HCT116 (cell line): ENCODE measurements at regions of chr1 and their contacts with region 1.

Region 1: GRCh38 chr1:66446261-66447001 is 87.5 kb upstream of the SGIP1 start:
- DNase-seq: peak; percentile 74
- ATAC-seq: peak; percentile 76
- H3K4me3 ChIP-seq: no peak overlapping the region
- H3K27ac ChIP-seq: no peak overlapping the region
- H3K4me1 ChIP-seq: peaks cover 3 to 18% of the 10 kb centered on the region in 2 experiments; a peak in 2 of 4 replicates
- H3K27me3 ChIP-seq: no peaks in the 10 kb centered on the region
- CTCF ChIP-seq: peak; percentile 61 to 94 (median 80)
- POLR2A ChIP-seq: no peak
- RAD21 ChIP-seq: peak; percentile 84

Region 2: GRCh38 chr1:66253330-66253921 is 193.0 kb before region 1 on chr1:
- CTCF ChIA-PET with region 1: interaction called, 122 read pairs
- POLR2A ChIA-PET with region 1: interaction called, 6 read pairs
- RAD21 ChIA-PET with region 1: interaction called, 7 to 23 read pairs
- intact Hi-C with region 1: loop called (anchors 1 kb)
- DNase-seq: peak; percentile 65
- ATAC-seq: peak; percentile 88
- H3K4me3 ChIP-seq: no peak overlapping the region
- H3K27ac ChIP-seq: peak overlapping the region; percentile 12; the same call in 1 of the 2 replicates
- H3K4me1 ChIP-seq: peaks cover 17 to 62% of the 10 kb centered on the region in 2 experiments
- H3K27me3 ChIP-seq: no peaks in the 10 kb centered on the region
- CTCF ChIP-seq: peak; percentile 67 to 93 (median 87)
- POLR2A ChIP-seq: no peak
- RAD21 ChIP-seq: peak; percentile 99

Region 3: DNA sequence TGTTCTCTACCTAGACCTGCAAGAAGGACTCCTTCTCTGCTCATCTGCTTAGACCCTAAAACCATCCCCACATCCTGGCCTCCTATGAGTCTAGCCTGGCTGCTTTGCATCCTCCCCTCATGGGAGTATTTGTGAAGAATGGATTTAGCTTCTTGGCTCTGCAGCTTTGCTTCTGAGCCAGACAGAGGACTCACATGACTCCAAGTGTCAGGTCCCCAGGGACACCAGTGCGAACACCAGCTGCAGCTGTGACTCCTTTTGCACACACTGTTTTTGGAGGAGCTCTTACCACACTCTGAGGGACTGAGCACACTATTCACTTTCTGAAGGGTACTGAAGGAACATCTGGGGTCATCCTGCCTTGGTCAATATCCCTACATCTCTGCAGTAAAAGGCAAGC is 44.2 kb before region 1 on chr1:
- CTCF ChIA-PET with region 1: no interaction called
- POLR2A ChIA-PET with region 1: no interaction called
- RAD21 ChIA-PET with region 1: no interaction called
- intact Hi-C with region 1: no loop called
- DNase-seq: no peak
- ATAC-seq: no peak
- H3K4me3 ChIP-seq: no peak overlapping the region
- H3K27ac ChIP-seq: no peak overlapping the region
- H3K4me1 ChIP-seq: no peaks in the 10 kb centered on the region
- H3K27me3 ChIP-seq: no peaks in the 10 kb centered on the region
- CTCF ChIP-seq: no peak
- POLR2A ChIP-seq: no peak
- RAD21 ChIP-seq: no peak

Region 4: DNA sequence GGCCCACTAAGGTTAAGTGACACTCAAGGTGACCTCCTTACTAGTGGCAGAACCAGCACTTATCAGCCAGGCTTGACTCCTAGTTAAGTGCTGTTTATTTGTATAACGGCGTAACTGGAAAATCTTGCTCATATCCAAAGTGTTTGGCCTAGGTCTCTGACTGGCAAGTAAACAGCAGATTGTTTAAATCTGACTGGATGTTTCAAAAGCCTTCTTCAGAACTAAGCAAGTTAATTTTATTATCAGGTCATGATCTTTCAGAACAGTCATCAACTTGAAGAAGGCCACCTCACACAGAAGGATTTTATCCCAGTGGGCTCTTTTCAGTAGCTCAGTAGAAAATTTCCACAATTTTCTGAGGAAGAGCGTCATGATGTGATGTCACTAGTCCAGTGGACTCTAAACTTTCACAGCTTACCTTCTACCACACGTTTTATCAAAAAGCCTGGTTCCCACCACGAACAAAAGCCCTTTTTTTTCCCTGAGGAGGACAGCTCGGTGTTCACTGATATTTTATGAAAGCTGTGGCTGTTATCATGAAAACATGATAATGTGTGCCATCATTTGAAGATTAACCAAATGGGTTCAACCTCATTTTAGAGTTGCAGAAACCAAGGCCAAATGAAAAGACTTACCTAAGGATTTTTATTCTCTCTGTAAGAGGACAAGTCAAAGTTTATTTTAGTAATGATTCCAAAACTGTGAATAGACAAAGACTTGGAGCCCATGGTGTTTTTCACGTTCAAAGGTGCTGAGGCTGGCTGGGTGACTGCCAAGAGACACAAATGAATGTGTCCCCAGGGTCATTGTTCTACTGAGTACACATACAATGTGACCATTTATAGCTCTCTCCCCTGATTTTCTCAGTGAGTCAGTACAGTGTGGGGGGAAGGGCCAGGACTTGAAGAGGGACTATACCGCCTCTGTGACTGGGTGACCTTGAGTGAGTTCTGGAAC is 96.7 kb after region 1 on chr1:
- CTCF ChIA-PET with region 1: no interaction called
- POLR2A ChIA-PET with region 1: no interaction called
- RAD21 ChIA-PET with region 1: no interaction called
- intact Hi-C with region 1: no loop called
- DNase-seq: peak; percentile 91
- ATAC-seq: peak; percentile 97
- H3K4me3 ChIP-seq: peak overlapping the region in 1 of 2 experiments; percentile 21; a peak in 1 of 4 replicates
- H3K27ac ChIP-seq: peak overlapping the region; percentile 71
- H3K4me1 ChIP-seq: peaks cover 21 to 51% of the 10 kb centered on the region in 2 experiments
- H3K27me3 ChIP-seq: no peaks in the 10 kb centered on the region
- CTCF ChIP-seq: no peak
- POLR2A ChIP-seq: no peak
- RAD21 ChIP-seq: no peak